ENCODE measurements at regions of chr5 and their contacts with region 1.

Region 1: DNA sequence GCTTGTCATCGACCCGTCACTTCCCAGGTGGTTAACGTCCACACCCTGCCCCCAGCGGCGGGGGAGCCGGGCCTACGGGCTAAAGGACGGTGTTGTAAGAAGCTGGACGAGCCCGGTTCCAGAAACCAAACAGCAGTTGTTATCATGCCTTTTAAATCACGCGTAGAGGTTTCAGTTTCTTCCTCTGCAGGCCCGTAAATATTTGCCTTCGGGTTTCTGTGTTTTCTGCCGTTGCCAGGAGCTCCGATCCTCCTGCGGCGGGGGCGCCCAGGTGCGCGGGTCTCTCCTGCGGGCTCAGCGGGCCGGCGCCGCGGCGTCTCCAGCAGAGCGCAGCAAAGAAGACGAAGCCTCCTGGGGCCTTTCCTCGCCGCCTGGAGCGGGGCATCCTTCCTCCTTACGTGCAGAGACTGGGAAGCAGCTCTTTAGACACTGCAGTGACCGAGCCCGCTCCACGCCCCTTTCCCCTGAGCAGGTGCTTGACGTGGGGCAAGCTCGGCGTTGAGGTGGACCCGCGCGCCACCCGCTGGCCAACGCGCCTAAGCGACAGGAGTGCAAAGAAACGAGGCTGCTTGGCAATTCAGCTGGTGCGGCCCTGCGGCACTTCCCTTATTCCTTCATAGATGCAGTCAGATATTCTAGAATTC is 21.8 kb upstream of the TTC1 start:
- DNase-seq: peak; percentile 85
- H3K4me3 Mint-ChIP-seq: peak overlapping the region; percentile 13
- H3K27ac Mint-ChIP-seq: no peak overlapping the region
- H3K4me1 Mint-ChIP-seq: peaks cover 12% of the 10 kb centered on the region
- H3K27me3 Mint-ChIP-seq: no peaks in the 10 kb centered on the region
- CTCF ChIP-seq: peak; percentile 98

Region 2: GRCh38 chr5:159274676-159275075 is 712.5 kb before region 1 on chr5:
- CTCF ChIA-PET with region 1: interaction called, 11 read pairs
- POLR2A ChIA-PET with region 1: no interaction called
- intact Hi-C with region 1: no loop called
- DNase-seq: no peak
- H3K4me3 Mint-ChIP-seq: peak overlapping the region; percentile 19
- H3K27ac Mint-ChIP-seq: peak overlapping the region; percentile 79
- H3K4me1 Mint-ChIP-seq: peaks cover 8% of the 10 kb centered on the region
- H3K27me3 Mint-ChIP-seq: no peaks in the 10 kb centered on the region
- CTCF ChIP-seq: no peak

Region 3: GRCh38 chr5:159444441-159445082 is 542.6 kb before region 1 on chr5:
- CTCF ChIA-PET with region 1: interaction called, 304 read pairs
- POLR2A ChIA-PET with region 1: interaction called, 7 read pairs
- intact Hi-C with region 1: loop called (anchors 1 kb)
- DNase-seq: peak; percentile 78
- H3K4me3 Mint-ChIP-seq: no peak overlapping the region
- H3K27ac Mint-ChIP-seq: no peak overlapping the region
- H3K4me1 Mint-ChIP-seq: peaks cover 11% of the 10 kb centered on the region
- H3K27me3 Mint-ChIP-seq: no peaks in the 10 kb centered on the region
- CTCF ChIP-seq: peak; percentile 84

Region 4: DNA sequence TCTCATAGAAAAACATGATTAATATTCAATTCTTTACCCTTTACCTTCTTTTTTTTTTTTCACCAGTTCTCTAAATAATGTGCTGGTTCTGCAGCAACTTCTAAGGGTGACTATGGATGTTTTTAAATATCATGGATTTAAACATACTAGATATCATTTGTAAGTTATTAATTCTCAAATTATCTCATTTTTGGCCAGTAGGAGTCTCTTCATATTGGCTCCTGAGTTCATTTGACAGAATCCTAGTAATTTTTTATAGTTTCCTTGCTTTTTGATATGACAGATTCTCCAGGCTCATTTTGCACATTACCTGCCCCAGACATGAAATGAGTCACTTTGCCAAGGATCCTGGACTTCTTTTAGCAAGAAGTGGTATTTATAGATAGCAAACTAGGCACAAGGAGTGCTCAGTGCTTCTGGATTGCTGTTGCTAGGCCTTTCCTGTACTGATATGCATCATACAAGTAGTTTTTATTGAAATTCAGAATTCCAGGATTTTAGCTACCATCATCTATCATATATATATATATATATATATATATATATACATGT is 455.5 kb before region 1 on chr5:
- CTCF ChIA-PET with region 1: interaction called, 8 read pairs
- POLR2A ChIA-PET with region 1: no interaction called
- intact Hi-C with region 1: loop called (anchors 5 kb)
- DNase-seq: no peak
- H3K4me3 Mint-ChIP-seq: no peak overlapping the region
- H3K27ac Mint-ChIP-seq: no peak overlapping the region
- H3K4me1 Mint-ChIP-seq: peaks cover 8% of the 10 kb centered on the region
- H3K27me3 Mint-ChIP-seq: no peaks in the 10 kb centered on the region
- CTCF ChIP-seq: peak; percentile 38

Region 5: DNA sequence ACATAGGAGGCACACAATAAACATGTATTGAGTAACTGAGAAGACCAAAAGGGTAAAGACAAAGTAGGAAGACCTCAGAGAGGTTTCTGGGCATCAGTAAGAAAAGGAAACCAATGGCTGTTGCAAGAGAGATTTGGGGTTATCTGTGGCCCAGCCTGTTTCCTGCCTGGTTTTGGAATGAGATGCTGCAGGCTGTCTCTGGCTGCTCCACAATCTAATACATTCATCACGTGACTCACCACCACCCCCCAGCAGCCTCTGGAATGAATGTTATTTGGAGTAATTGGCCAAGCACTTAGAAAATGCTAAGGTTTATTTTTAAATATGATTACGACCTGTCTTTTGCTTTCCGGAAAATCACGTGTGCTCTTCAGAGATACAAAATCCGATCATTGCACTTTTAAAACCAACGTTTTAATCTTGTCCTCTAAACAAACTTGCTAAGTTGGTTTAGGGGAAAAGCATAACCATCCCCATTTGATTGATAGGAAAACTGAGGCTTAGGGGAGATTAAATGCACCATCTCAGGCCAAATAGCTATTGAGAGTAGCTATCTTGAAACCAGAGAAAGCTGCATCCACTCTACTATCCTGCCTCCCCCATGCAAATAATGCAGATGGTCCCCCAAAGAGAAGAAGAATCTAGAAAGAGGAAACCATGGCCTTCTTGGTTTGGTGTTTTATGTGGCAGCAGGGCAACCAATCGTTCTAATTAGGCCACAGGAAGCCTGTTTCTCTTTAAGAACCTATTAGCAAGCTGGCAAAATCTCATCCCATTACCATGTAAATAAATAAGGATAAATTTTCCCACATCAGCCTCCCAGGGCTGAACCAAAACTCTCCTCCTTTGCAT is 222.6 kb before region 1 on chr5:
- CTCF ChIA-PET with region 1: no interaction called
- POLR2A ChIA-PET with region 1: no interaction called
- intact Hi-C with region 1: no loop called
- DNase-seq: peak; percentile 36
- H3K4me3 Mint-ChIP-seq: no peak overlapping the region
- H3K27ac Mint-ChIP-seq: no peak overlapping the region
- H3K4me1 Mint-ChIP-seq: peaks cover 8% of the 10 kb centered on the region
- H3K27me3 Mint-ChIP-seq: no peaks in the 10 kb centered on the region
- CTCF ChIP-seq: no peak

Region 6: DNA sequence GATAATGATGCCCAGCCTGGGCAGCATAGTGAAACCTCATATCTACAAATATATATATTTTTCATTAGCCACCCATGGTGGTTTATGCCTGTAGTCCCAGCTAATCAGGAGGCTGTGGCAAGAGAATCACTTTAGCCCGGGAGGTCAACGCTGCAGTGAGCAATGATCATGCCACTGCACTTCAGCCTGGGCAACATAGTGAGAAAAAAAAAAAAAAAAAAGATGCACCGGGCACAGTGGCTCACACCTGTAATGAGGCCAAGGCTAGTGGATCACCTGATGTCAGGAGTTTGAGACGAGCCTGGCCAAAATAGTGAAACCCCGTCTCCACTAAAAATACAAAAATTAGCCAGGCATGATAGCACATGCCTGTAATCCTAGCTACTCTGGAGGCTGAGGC is 121.1 kb before region 1 on chr5:
- CTCF ChIA-PET with region 1: no interaction called
- POLR2A ChIA-PET with region 1: no interaction called
- intact Hi-C with region 1: no loop called
- DNase-seq: no peak
- H3K4me3 Mint-ChIP-seq: no peak overlapping the region
- H3K27ac Mint-ChIP-seq: no peak overlapping the region
- H3K4me1 Mint-ChIP-seq: peaks cover 7% of the 10 kb centered on the region
- H3K27me3 Mint-ChIP-seq: no peaks in the 10 kb centered on the region
- CTCF ChIP-seq: no peak

Region 7: DNA sequence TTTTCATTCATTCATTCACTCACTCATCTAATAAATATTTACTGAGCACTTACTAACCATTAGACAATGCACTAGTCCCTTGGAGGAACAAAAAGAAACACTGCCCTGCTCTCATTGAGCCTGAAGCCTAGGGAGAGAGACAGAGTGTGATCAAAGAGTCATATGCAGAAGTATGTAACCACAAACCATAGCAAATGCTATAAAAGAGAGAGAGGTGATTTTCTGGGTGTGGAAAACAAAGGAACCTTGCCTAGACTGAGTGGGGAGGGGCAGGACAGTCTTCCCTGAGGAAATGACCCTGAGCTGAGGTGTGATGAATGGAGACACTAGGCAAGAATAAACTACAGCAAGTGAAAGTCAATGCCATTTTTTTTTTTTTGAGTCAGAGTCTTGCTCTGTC is 81.7 kb before region 1 on chr5:
- CTCF ChIA-PET with region 1: interaction called, 11 read pairs
- POLR2A ChIA-PET with region 1: no interaction called
- intact Hi-C with region 1: no loop called
- DNase-seq: peak; percentile 96
- H3K4me3 Mint-ChIP-seq: no peak overlapping the region
- H3K27ac Mint-ChIP-seq: peak overlapping the region; percentile 15
- H3K4me1 Mint-ChIP-seq: peaks cover 60% of the 10 kb centered on the region
- H3K27me3 Mint-ChIP-seq: no peaks in the 10 kb centered on the region
- CTCF ChIP-seq: no peak

Region 8: DNA sequence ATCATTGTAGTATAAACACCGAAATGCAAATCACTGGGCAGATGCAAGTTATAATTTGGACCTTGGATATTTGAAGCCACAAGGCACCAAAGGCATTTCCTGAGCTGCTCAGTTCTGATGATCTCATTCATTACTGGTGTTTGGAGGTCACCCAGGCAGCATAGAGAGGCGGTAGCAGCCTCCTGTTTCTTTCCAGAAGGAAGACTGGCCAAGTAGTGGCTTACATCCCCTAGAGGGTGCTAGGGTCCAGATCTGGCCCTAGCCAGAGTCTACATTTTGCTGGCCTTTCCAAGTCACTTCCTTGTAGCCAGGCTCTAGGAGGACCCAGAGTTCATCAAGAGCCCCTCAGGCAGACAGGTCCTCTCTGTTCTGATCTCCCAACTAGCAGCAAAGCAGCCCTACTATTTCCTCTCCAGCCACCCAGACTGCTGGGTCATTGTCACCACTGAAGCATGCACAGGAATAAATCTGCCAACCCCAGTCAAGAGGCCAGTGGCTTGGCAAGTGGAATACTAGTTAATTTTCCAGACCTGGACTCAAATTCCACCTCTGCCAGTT is 11.6 kb before region 1 on chr5:
- CTCF ChIA-PET with region 1: interaction called, 13 read pairs
- POLR2A ChIA-PET with region 1: no interaction called
- intact Hi-C with region 1: no loop called
- DNase-seq: peak; percentile 69
- H3K4me3 Mint-ChIP-seq: no peak overlapping the region
- H3K27ac Mint-ChIP-seq: no peak overlapping the region
- H3K4me1 Mint-ChIP-seq: peaks cover 9% of the 10 kb centered on the region
- H3K27me3 Mint-ChIP-seq: no peaks in the 10 kb centered on the region
- CTCF ChIP-seq: no peak

Measured in MCF 10A (cell line).